Pancreas (tissue), 10 donors: ENCODE measurements at regions of chr4 and their contacts with region 1.

Region 1: DNA sequence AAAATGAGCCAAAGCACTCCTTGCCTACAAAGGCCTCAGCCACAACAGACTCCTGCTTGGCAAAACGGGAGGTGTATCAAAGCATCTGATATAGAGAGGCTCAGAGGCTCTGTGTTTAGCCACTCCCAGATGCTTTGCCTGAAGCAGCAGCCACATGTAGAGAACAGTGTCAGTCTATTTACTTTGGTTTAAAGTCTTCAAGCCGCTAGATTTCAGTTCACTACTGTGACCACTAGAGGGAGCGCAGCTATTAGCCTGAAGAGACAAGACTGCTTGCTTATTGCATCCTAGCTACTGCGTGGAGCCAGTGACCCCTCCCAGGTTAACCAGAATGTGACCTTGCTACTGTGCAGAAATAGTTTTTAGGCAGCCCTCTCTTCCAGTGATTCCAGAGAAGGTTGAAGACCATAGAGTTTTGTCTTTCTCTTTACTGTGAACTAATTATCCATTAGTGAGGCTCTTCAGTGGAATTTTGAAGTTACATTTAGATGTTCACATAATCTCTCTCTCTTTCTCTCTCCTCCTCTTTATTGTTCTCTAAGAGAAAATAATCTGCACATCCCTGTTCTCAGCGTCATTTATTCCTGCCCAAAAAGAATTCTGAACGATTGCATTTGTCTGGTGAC is 39.3 kb downstream of the BMP3 start:
- DNase-seq: peak in 4 of 6 donors; percentile 42 to 75 (median 54)
- ATAC-seq: peak; percentile 84 to 98 (median 95)
- H3K4me3 ChIP-seq: no peak overlapping the region
- H3K27ac ChIP-seq: no peak overlapping the region
- H3K4me1 ChIP-seq: no peaks in the 10 kb centered on the region
- H3K27me3 ChIP-seq: no peaks in the 10 kb centered on the region
- CTCF ChIP-seq: peak; percentile 82 to 89 (median 84)

Region 2: DNA sequence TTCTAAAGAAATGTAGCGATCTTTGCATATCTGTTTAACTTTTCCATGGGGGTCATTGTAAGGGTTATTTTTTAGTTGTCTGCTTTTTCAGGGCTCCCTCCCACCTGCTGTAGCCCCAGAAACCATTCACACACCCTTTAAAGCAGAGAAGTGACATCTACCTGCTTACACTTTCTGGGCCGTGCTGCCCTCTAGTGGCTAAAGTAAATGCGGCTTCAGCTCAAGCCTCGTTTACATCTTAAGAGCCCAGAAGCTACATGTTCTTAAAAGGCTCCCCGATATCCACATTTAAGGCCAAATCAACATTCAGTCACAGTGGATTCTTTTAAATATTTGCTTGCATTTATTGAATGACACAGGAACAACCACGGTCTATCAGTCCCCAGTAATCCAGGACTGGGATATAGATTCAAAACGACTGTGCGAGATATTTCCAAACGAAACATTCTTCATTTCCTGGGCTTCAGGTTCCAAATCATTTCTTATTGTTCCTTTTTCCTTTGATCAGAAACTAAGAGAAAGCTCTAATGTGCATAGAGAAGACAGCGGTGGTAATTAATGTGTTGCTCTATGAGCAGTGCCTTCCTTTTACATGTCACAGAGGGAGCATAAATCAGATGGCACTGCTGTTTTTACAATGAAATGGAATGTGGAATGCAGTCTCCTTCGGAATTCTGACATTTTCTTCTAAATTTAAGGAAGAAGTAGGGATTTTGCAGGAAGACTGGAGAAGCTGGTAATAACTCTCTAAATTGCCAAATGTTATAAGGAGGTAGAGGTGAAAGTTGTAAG is 282.0 kb after region 1 on chr4:
- intact Hi-C with region 1: loop called in 2 of 3 experiments (anchors 5 kb)
- DNase-seq: peak; percentile 36 to 79 (median 70)
- ATAC-seq: peak; percentile 71 to 93 (median 90)
- H3K4me3 ChIP-seq: no peak overlapping the region
- H3K27ac ChIP-seq: no peak overlapping the region
- H3K4me1 ChIP-seq: no peaks in the 10 kb centered on the region
- H3K27me3 ChIP-seq: no peaks in the 10 kb centered on the region
- CTCF ChIP-seq: peak; percentile 80 to 93 (median 80)